ENCODE measurements at regions of chr6 and their contacts with region 1.

Region 1: GRCh38 chr6:89432875-89433251 is at the start of gene ANKRD6:
- DNase-seq: peak; percentile 28
- ATAC-seq: peak; percentile 97
- H3K4me3 ChIP-seq: peak within 1 kb of the TSS; percentile 55 to 61
- H3K27ac ChIP-seq: peak within 1 kb of the TSS; percentile 51; the same call in 1 of the 2 replicates
- H3K4me1 ChIP-seq: peaks cover 0 to 14% of the 10 kb centered on the region in 2 experiments; a peak in 2 of 4 replicates
- H3K27me3 ChIP-seq: no peaks in the 10 kb centered on the region
- CTCF ChIP-seq: peak; percentile 54 to 83 (median 80); a peak in 5 of 6 replicates
- POLR2A ChIP-seq: no peak
- RAD21 ChIP-seq: peak; percentile 82
- total RNA-seq, gene ANKRD6: 9.9 TPM

Region 2: DNA sequence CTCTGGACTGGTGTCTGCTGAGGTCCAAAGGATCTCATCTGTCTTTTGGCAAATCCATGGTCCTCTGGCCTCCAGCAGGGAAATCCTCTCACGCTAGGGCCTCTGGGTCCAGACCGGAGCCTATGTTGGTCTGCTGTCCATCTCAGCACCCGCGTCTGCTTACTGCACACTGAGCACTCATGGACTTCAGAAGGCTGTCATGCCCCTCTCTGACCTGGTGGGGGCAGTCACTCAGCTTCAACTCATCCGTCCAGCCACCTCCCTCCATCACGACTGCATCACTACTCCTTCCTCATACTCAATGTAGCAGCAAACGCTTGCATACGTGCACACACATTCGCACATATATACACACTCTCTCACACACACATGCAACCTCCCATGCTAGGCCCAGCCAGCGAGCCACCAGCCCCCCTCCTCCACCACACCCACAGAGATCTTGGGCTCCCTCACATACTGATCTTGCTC is 151.1 kb before region 1 on chr6:
- CTCF ChIA-PET with region 1: no interaction called
- POLR2A ChIA-PET with region 1: no interaction called
- RAD21 ChIA-PET with region 1: no interaction called
- intact Hi-C with region 1: no loop called
- DNase-seq: peak; percentile 66
- ATAC-seq: peak; percentile 99
- H3K4me3 ChIP-seq: no peak overlapping the region
- H3K27ac ChIP-seq: no peak overlapping the region
- H3K4me1 ChIP-seq: peaks cover 0 to 6% of the 10 kb centered on the region in 2 experiments; a peak in 1 of 4 replicates
- H3K27me3 ChIP-seq: no peaks in the 10 kb centered on the region
- CTCF ChIP-seq: peak; percentile 60 to 92 (median 74)
- POLR2A ChIP-seq: no peak
- RAD21 ChIP-seq: peak; percentile 69

Region 3: GRCh38 chr6:89610149-89610642 is 177.3 kb after region 1 on chr6:
- CTCF ChIA-PET with region 1: interaction called, 9 read pairs
- POLR2A ChIA-PET with region 1: no interaction called
- RAD21 ChIA-PET with region 1: no interaction called
- intact Hi-C with region 1: loop called (anchors 1 kb)
- DNase-seq: peak; percentile 19
- ATAC-seq: peak; percentile 89
- H3K4me3 ChIP-seq: no peak overlapping the region
- H3K27ac ChIP-seq: no peak overlapping the region
- H3K4me1 ChIP-seq: no peaks in the 10 kb centered on the region
- H3K27me3 ChIP-seq: no peaks in the 10 kb centered on the region
- CTCF ChIP-seq: peak; percentile 64 to 95 (median 89); a peak in 5 of 6 replicates
- POLR2A ChIP-seq: no peak
- RAD21 ChIP-seq: peak; percentile 63

Region 4: GRCh38 chr6:89638320-89639195 is 205.7 kb after region 1 on chr6 and contains the start of gene LYRM2:
- CTCF ChIA-PET with region 1: no interaction called
- POLR2A ChIA-PET with region 1: no interaction called
- RAD21 ChIA-PET with region 1: no interaction called
- intact Hi-C with region 1: no loop called
- DNase-seq: peak; percentile 78
- ATAC-seq: peak; percentile 97
- H3K4me3 ChIP-seq: peak within 1 kb of the TSS; percentile 56 to 77
- H3K27ac ChIP-seq: peak within 1 kb of the TSS; percentile 68
- H3K4me1 ChIP-seq: peaks cover 6 to 16% of the 10 kb centered on the region in 2 experiments; a peak in 3 of 4 replicates
- H3K27me3 ChIP-seq: no peaks in the 10 kb centered on the region
- CTCF ChIP-seq: 0 out of 6 replicates have a peak, but pooled peaks of 1 of the 3 experiments have one; percentile 14
- POLR2A ChIP-seq: no peak
- RAD21 ChIP-seq: no peak
- total RNA-seq, gene LYRM2: 26.3 TPM

Region 5: DNA sequence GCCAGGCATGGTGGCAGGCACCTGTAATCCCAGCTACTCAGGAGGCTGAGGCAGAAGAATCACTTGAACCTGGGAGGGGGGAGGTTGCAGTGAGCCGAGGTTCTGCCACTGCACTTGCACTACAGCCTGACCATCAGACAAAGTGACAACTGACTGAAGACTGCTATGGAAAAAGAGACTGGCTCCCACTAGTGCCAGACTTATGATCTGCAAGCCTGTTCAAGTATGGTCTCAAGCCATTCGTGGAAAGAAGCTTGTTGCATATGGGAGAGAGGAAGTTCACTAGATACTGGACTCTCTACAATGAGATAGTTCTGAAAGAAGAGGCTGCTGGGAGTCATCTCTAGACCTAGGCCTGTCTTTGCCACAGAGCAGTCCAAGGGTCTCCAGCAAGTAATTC is 360.0 kb after region 1 on chr6:
- CTCF ChIA-PET with region 1: no interaction called
- POLR2A ChIA-PET with region 1: no interaction called
- RAD21 ChIA-PET with region 1: no interaction called
- intact Hi-C with region 1: loop called (anchors 10 kb)
- DNase-seq: peak; percentile 8
- ATAC-seq: peak; percentile 96
- H3K4me3 ChIP-seq: no peak overlapping the region
- H3K27ac ChIP-seq: no peak overlapping the region
- H3K4me1 ChIP-seq: no peaks in the 10 kb centered on the region
- H3K27me3 ChIP-seq: no peaks in the 10 kb centered on the region
- CTCF ChIP-seq: peak in 2 of 3 experiments; percentile 59 to 78; a peak in 5 of 6 replicates
- POLR2A ChIP-seq: no peak
- RAD21 ChIP-seq: peak; percentile 29; the same call in 1 of the 2 replicates

Region 6: DNA sequence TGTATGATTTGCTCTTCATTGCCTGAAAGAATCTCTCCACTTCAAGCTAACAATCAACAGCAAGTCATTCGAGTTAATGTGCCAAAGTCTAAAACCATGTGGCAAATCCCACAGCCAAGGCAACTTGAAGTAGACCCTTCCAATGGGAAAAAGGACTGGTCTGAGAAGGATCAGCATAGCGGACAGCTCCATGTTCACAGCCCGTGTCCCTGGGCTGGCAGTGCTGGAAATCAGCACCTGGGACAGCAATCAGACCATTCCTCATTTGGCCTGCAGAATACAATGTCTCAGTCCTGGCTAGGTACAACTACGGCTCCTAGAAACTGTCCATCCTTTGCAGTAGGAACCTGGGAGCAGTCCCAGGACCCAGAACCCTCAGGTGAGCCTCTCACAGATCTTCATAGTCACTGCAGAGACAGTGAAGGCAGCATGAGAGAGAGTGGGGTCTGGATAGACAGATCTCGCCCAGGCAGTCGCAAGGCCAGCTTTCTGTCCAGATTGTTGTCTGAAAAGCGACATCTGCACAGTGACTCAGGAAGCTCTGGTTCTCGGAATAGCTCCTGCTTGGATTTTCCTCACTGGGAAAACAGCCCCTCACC is 462.5 kb after region 1 on chr6:
- CTCF ChIA-PET with region 1: no interaction called
- POLR2A ChIA-PET with region 1: no interaction called
- RAD21 ChIA-PET with region 1: no interaction called
- intact Hi-C with region 1: no loop called
- DNase-seq: no peak
- ATAC-seq: peak; percentile 70
- H3K4me3 ChIP-seq: no peak overlapping the region
- H3K27ac ChIP-seq: no peak overlapping the region
- H3K4me1 ChIP-seq: no peaks in the 10 kb centered on the region
- H3K27me3 ChIP-seq: peaks cover 7% of the 10 kb centered on the region; the same call in 1 of the 2 replicates
- CTCF ChIP-seq: no peak
- POLR2A ChIP-seq: no peak
- RAD21 ChIP-seq: no peak

Region 7: DNA sequence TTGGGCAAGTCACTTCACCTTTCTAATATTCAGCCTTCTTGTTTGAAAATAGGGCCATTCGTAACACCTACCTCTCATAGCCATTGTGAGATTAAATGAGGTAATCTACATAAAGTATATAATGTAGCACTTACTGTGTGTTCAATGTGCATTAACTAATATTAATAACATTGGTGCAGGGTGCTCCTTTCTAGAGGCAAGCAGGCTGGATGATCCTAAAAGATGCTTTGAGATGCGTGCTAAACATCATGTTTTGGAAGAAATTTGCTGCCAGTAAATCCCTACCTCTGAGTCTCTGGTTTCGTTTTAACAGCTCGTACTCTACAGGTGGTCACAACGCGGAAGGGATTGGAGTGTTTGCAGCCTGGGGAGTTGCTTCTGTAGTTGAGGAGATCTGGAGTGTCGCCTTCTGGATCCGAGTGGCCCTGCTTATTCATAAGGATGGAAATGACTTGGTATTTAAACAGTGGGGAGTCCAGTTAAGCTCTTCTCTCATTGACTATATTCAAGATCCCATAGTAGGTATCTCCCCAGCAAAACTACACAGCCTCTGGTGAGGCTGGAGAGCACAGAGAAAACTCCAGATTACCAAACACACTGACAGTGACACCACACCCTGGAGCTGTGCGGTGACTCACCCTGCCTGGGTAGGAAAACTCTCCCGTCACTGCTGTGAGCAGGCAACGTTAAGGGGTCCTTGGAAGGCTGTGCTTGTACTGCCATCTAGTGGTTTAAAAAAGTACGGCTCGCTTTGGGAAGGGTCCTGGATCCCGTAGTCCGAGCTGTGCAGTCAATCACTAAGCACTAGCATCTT is 1046.1 kb after region 1 on chr6:
- CTCF ChIA-PET with region 1: no interaction called
- POLR2A ChIA-PET with region 1: no interaction called
- RAD21 ChIA-PET with region 1: no interaction called
- intact Hi-C with region 1: loop called (anchors 5 kb)
- DNase-seq: peak; percentile 87
- ATAC-seq: peak; percentile 96
- H3K4me3 ChIP-seq: no peak overlapping the region
- H3K27ac ChIP-seq: no peak overlapping the region
- H3K4me1 ChIP-seq: peaks cover 0 to 11% of the 10 kb centered on the region in 2 experiments; a peak in 2 of 4 replicates
- H3K27me3 ChIP-seq: no peaks in the 10 kb centered on the region
- CTCF ChIP-seq: peak; percentile 79 to 91 (median 87)
- POLR2A ChIP-seq: no peak
- RAD21 ChIP-seq: peak; percentile 99